Ovary (tissue), 10 donors: ENCODE measurements at regions of chr6 and their contacts with region 1.

Region 1: DNA sequence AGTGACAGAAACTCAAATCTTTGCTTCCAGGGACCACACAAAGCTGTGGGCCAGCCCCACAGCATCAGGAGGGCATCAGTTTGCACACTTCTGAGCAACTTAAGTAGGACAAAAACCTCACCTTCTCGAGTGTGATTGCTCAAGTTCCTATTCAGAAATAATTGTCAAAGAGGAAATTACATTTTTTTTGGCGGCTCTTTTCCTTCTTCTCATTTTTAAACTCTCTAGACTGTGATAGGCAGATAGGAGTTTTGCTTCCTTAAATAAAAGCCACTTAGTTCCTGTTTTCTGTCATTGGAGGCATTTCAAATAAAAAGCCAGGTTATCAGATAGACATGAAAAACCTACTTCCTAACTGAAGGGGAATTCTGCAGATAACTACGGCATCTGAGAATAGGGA is 11.2 kb upstream of the TAGAP start:
- DNase-seq: no peak
- H3K4me3 ChIP-seq: no peak overlapping the region
- H3K27ac ChIP-seq: no peak overlapping the region
- H3K4me1 ChIP-seq: no peaks in the 10 kb centered on the region
- H3K27me3 ChIP-seq: no peaks in the 10 kb centered on the region
- CTCF ChIP-seq: no peak
- EP300 ChIP-seq: no peak
- POLR2A ChIP-seq: no peak

Region 2: DNA sequence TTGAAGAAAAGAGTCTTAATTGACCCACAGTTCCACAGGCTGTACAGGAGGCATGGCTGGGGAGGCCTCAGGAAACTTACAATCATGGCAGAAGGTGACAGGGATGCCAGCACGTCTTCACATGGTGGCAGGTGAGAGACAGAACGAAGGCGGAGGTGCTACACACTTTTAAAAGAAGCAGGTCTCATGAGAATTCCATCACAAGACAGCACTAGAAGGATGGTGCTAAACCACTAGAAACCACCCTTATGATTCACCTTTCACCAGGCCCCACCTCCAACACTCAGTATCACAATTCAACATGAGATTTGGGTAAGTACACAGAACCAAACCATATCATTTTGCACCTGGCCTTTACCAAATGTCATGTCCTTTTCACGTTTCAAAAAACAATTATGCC is 32.1 kb before region 1 on chr6:
- intact Hi-C with region 1: loop called in 1 of 4 experiments (anchors 2 kb)
- DNase-seq: no peak
- H3K4me3 ChIP-seq: no peak overlapping the region
- H3K27ac ChIP-seq: no peak overlapping the region
- H3K4me1 ChIP-seq: no peaks in the 10 kb centered on the region
- H3K27me3 ChIP-seq: no peaks in the 10 kb centered on the region
- CTCF ChIP-seq: no peak
- EP300 ChIP-seq: no peak
- POLR2A ChIP-seq: no peak